ENCODE measurements at regions of chr5 and their contacts with region 1.

Region 1: GRCh38 chr5:169577951-169578350 is 5.6 kb upstream of the SPDL1 start:
- DNase-seq: no peak
- H3K4me3 ChIP-seq: no peak overlapping the region
- H3K27ac ChIP-seq: no peak overlapping the region
- H3K4me1 ChIP-seq: no peaks in the 10 kb centered on the region
- H3K27me3 ChIP-seq: no peaks in the 10 kb centered on the region
- CTCF ChIP-seq: peak in 1 of 3 experiments; percentile 7
- POLR2A ChIP-seq: no peak

Region 2: DNA sequence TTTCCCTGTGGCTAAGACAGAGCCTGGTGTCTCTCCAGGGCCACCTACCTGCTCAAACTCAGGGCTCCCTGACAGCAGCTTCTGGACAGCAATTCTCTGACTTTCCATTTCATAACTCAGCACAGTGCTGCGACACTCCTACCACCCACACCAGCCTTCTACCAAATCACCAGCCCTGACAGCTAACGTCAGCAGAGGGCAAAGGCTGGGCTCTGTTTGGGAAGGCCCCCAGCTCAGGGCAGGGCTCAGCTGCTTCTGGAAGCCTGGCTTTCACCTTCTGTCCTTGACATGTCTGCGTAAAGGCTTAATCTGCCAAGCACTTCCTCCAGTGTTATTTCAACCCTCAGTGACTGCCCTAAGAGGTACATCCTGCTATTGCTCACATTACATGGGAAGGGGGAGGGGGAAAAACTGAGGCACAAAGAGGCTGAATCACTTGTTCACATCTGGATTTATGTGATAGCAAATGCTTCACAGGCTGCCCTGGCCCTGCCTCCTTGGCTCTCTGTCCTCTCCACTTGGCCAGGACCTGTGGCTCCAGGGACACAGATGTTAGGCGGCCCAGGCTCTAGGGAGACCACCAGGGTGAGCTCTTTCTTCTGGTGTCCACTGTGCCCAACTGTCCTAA is 896.3 kb before region 1 on chr5:
- intact Hi-C with region 1: loop called (anchors 10 kb)
- DNase-seq: no peak
- H3K4me3 ChIP-seq: no peak overlapping the region
- H3K27ac ChIP-seq: no peak overlapping the region
- H3K4me1 ChIP-seq: peaks cover 7% of the 10 kb centered on the region
- H3K27me3 ChIP-seq: no peaks in the 10 kb centered on the region
- CTCF ChIP-seq: no peak
- POLR2A ChIP-seq: no peak

Region 3: GRCh38 chr5:170597109-170597751 is 1019.3 kb after region 1 on chr5:
- intact Hi-C with region 1: no loop called
- DNase-seq: peak; percentile 35
- H3K4me3 ChIP-seq: no peak overlapping the region
- H3K27ac ChIP-seq: peak overlapping the region in 1 of 2 donors; percentile 19
- H3K4me1 ChIP-seq: no peaks in the 10 kb centered on the region
- H3K27me3 ChIP-seq: no peaks in the 10 kb centered on the region
- CTCF ChIP-seq: no peak
- POLR2A ChIP-seq: no peak

Measured in testis (tissue), 5 donors.